ENCODE measurements at regions of chr9 and their contacts with region 1.

Region 1: GRCh38 chr9:12719431-12719830 is 26.2 kb downstream of the TYRP1 start:
- DNase-seq: no peak
- ATAC-seq: no peak
- H3K4me3 ChIP-seq: no peak overlapping the region
- H3K4me3 Mint-ChIP-seq: no peak overlapping the region
- H3K27ac ChIP-seq: no peak overlapping the region
- H3K27ac Mint-ChIP-seq: no peak overlapping the region
- H3K4me1 ChIP-seq: no peaks in the 10 kb centered on the region
- H3K4me1 Mint-ChIP-seq: no peaks in the 10 kb centered on the region
- H3K27me3 ChIP-seq: no peaks in the 10 kb centered on the region
- H3K27me3 Mint-ChIP-seq: no peaks in the 10 kb centered on the region

Region 2: DNA sequence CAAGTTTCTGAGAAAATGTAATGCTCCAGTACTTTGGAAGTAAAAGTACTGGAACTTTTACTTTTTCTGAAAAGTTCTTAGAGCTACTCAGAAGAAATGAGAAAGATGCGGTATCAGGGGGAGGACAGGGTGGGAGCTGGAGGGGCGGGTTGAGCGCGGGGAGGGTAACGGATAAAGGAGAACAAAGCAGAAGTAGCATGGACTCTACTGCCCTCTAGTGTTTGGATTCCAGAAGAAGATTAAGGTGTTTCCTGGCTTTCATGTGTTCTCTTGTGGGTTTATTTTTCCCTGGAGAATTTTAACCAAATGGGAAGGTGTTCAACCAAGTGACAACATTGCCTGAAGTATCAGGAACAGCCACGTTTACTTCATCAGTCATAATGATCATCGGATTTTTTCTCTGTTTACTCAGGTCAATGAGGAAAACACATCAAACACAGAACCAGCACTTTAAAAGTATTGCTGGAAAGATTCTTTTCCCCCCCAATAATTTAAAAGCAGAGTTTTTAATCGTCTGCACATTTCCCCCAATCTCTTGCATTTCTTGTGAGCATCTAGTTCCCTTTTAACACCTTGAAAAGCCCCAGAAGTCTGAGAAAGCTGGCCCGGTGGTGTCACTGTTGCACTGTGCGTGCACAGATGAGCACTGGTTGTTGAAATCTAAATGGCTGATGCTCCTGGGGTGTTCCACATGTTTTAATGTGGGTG is 369.4 kb after region 1 on chr9:
- CTCF ChIA-PET with region 1: no interaction called
- POLR2A ChIA-PET with region 1: no interaction called
- intact Hi-C with region 1: loop called in 1 of 2 experiments (anchors 2 kb)
- DNase-seq: no peak
- ATAC-seq: no peak
- H3K4me3 ChIP-seq: no peak overlapping the region
- H3K4me3 Mint-ChIP-seq: no peak overlapping the region
- H3K27ac ChIP-seq: no peak overlapping the region
- H3K27ac Mint-ChIP-seq: no peak overlapping the region
- H3K4me1 ChIP-seq: no peaks in the 10 kb centered on the region
- H3K4me1 Mint-ChIP-seq: no peaks in the 10 kb centered on the region
- H3K27me3 ChIP-seq: no peaks in the 10 kb centered on the region
- H3K27me3 Mint-ChIP-seq: no peaks in the 10 kb centered on the region

Measured in naive thymus-derived CD4-positive, alpha-beta T cell (primary cell).